ENCODE measurements at regions of chr2 and their contacts with region 1.

Region 1: GRCh38 chr2:238569507-238570195 is 142.9 kb downstream of the ASB1 start:
- DNase-seq: no peak
- H3K4me3 ChIP-seq: no peak overlapping the region
- CTCF ChIP-seq: no peak

Region 2: GRCh38 chr2:238473014-238473413 is 96.6 kb before region 1 on chr2:
- in situ Hi-C with region 1: loop called (anchors 5 kb)
- DNase-seq: no peak
- H3K4me3 ChIP-seq: no peak overlapping the region
- CTCF ChIP-seq: no peak

Region 3: DNA sequence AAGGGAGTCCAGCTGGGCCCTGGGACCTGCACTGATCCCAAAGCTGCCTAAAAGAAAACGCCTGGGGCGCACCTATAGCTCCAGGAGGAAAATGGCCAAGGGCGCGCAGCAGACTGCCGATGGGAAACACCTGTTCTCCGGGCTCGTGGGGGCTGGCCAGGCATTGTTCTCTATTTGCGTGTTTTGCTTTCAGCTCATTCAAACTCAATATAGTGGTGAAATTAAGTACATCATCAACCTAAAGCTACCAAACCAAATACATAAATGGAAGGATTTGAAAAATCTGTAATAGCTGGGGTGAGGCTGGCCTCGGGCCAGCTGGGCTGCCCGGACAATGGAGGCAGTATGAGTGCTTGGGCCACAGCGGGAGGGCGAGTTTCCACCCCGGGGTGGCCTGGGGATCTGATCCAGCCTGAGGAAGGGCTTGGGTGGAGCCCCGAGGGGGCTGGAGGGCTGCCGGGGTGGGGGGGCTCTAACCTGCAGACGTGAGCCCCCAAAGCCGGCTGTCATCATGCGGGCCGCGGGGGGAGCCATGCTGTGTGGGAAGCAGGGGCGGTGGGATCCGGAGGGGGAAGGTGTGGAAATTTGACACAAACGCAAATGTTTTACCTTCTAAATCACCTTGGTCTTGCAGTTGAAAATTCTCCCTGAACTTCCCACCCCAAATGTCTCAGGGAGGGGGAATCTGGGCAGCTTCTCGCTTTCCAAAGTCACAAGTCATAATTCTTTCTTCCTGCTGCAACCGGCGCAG is 65.3 kb before region 1 on chr2:
- in situ Hi-C with region 1: loop called (anchors 5 kb)
- DNase-seq: no peak
- H3K4me3 ChIP-seq: no peak overlapping the region
- CTCF ChIP-seq: no peak

Region 4: DNA sequence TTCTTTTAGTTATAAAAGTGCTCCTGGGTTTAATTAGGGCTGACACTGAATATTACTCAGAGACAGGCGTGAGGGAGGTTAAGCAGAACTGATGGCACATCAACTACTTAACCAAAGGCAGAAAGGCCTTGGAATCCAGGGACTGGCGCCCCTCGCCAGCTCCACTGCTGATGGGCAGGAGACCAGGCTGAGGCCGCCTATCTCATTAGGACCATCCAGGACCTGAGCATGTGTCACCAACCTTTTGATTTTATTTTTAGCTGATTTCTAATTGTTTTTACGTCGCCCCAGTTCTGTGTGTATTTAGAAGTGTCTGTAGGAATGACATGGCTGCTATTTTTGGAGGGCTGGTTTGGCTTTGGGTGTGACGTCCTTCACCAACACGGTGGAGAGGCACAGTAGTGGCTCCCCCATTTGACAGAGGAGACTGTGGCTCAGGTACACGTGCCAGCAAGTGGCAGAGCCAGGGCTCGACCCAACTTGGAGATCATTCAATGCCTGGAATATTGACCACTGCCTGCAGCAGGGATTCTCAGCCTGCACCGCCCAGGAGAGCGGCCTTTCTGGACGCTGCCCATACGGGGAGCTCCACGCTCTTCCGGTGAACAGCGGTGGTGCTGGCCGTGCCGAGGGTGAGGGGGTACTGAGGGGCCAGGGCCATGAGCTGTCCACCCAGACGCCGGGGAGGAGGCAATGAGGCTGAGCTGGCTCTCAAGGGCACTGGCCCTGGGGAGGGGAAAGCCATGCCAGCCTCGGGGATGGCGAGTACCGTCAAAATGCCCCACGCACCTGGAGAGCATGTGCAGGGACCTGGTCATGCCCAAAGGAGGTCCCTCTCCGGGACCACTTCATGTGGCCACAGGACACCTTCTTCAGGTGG is 62.8 kb after region 1 on chr2:
- in situ Hi-C with region 1: no loop called
- DNase-seq: no peak
- H3K4me3 ChIP-seq: no peak overlapping the region
- CTCF ChIP-seq: no peak

Measured in astrocyte of the cerebellum (primary cell).